ENCODE measurements at regions of chr14 and their contacts with region 1.

Region 1: DNA sequence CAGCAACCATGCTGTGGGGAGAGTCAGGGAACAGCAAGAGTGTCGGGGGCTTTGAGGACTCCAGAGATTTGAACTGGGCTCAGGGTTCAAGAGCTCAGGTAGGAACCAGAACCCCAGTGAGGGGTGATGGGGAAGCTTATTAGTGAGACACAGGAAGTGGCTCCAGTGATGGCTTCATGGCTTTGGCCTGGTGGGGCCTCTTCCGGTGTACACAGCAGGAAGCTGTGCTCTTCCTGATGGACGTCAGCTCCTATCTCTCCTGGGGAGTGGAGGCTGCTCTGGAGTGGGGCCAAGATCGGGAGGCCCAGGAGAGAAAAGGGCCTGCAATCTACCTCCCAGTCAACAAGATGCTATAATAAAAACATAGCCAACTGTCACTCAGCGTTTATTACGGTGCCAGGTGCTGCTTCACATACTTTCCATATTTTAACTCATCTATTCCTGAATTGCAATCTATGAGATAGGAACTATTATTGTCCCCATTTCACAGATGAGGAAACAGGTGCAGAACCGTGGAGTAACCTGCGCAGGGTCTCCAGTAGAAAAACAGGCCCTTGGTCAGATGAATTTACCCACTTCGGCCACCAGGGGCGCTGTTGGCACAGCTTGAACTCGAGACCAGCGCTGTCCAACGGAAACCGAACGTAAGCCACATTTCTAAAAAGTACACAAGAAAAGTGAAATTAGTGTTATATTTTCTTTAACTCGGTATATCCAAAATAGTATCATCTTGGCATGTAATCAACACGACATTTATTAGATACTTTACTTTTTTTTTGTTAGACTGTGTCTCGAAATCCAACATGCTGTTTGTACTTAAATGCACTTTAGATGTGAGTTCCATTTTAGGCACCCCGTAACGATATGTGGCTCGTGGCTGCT is 63.6 kb upstream of the DLK1 start:
- DNase-seq: peak in 1 of 2 experiments; percentile 84
- H3K4me3 ChIP-seq: no peak overlapping the region
- H3K27ac ChIP-seq: no peak overlapping the region
- H3K4me1 ChIP-seq: peaks cover 0 to 7% (median 4%) of the 10 kb centered on the region in 4 experiments; a peak in 5 of 7 replicates
- H3K27me3 ChIP-seq: no peaks in the 10 kb centered on the region
- CTCF ChIP-seq: peak; percentile 81 to 89 (median 82)
- EP300 ChIP-seq: no peak
- POLR2A ChIP-seq: no peak
- RAD21 ChIP-seq: peak; percentile 79 to 80

Region 2: DNA sequence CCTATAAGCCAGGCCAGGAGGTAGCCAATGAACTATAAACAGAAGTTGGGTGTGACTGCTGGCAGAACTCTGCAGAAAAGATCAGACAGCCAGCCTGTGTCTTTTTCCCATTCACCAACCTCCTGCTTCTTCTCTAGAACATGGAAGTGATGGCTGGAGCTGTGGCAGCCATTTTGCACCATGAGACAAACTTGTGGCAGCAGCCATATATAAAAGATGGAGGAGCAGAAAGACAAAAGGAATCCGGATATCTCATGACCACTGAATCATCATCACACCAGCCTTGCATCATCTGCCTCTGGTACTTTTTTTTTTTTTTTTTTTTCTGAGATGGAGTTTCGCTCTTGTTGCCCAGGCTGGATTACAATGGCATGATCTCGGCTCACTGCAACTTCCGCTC is 84.6 kb before region 1 on chr14:
- CTCF ChIA-PET with region 1: no interaction called
- POLR2A ChIA-PET with region 1: no interaction called
- DNase-seq: no peak
- H3K4me3 ChIP-seq: no peak overlapping the region
- H3K27ac ChIP-seq: no peak overlapping the region
- H3K4me1 ChIP-seq: peaks cover 0 to 3% (median 0%) of the 10 kb centered on the region in 4 experiments; a peak in 2 of 7 replicates
- H3K27me3 ChIP-seq: peaks cover 0 to 3% (median 1%) of the 10 kb centered on the region in 4 experiments; a peak in 2 of 7 replicates
- CTCF ChIP-seq: no peak
- EP300 ChIP-seq: no peak
- POLR2A ChIP-seq: no peak
- RAD21 ChIP-seq: no peak

Region 3: GRCh38 chr14:100677554-100678468 is 14.7 kb after region 1 on chr14:
- CTCF ChIA-PET with region 1: interaction called, 60 read pairs
- POLR2A ChIA-PET with region 1: interaction called, 4 read pairs
- DNase-seq: no peak
- H3K4me3 ChIP-seq: no peak overlapping the region
- H3K27ac ChIP-seq: no peak overlapping the region
- H3K4me1 ChIP-seq: peaks cover 2 to 18% (median 10%) of the 10 kb centered on the region in 4 experiments
- H3K27me3 ChIP-seq: peaks cover 0 to 9% (median 6%) of the 10 kb centered on the region in 4 experiments; a peak in 5 of 7 replicates
- CTCF ChIP-seq: no peak
- EP300 ChIP-seq: no peak
- POLR2A ChIP-seq: no peak
- RAD21 ChIP-seq: no peak